IMR-90 (cell line): ENCODE measurements at regions of chr4 and their contacts with region 1.

Region 1: DNA sequence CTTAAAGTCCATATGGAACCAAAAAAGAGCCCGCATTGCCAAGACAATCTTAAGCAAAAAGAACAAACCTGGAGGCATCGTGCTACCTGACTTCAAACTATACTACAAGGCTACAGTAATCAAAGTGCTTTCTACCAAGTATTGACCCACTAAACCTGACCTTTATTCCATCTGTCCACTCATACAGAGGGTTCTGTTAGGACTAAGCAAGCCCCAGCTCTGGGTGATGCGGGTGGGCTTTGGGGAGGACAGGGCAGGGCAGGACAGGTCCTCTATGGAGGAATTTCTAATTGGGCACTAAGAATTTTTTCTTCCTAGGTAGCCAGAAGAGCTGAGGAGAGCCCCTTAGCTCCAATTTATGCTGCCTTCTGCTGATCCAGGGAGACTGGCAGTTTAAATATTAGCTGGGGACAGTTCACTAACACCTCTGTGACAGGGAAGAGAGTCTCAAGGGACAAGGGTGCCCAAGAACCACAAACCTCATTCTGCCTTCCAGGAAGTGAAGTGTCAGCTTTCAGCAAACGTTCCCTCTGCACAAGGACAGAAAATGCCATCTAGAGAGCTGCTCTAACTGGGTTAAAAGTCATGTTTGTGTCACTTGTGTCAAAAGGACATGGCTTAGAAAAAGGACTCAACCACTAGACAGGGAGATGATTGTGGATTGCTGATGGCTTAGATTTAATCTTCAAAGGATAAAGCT is 143.2 kb downstream of the KIT start:
- DNase-seq: no peak
- ATAC-seq: no peak
- H3K4me3 ChIP-seq: no peak overlapping the region
- H3K27ac ChIP-seq: no peak overlapping the region
- H3K4me1 ChIP-seq: 0 out of 2 replicates have a peak, but pooled peaks cover 2% of the 10 kb centered on the region
- H3K27me3 ChIP-seq: no peaks in the 10 kb centered on the region; the same call in none of the 2 replicates
- CTCF ChIP-seq: no peak
- POLR2A ChIP-seq: no peak
- RAD21 ChIP-seq: no peak

Region 2: GRCh38 chr4:55312489-55313101 is 511.6 kb after region 1 on chr4:
- CTCF ChIA-PET with region 1: no interaction called
- POLR2A ChIA-PET with region 1: no interaction called
- dilution Hi-C with region 1: no loop called
- in situ Hi-C with region 1: loop called (anchors 25 kb)
- intact Hi-C with region 1: no loop called
- DNase-seq: peak; percentile 58
- ATAC-seq: peak; percentile 69
- H3K4me3 ChIP-seq: no peak overlapping the region
- H3K27ac ChIP-seq: no peak overlapping the region
- H3K4me1 ChIP-seq: no peaks in the 10 kb centered on the region
- H3K27me3 ChIP-seq: peaks cover 6% of the 10 kb centered on the region
- CTCF ChIP-seq: peak; percentile 66
- POLR2A ChIP-seq: no peak
- RAD21 ChIP-seq: peak; percentile 56

Region 3: DNA sequence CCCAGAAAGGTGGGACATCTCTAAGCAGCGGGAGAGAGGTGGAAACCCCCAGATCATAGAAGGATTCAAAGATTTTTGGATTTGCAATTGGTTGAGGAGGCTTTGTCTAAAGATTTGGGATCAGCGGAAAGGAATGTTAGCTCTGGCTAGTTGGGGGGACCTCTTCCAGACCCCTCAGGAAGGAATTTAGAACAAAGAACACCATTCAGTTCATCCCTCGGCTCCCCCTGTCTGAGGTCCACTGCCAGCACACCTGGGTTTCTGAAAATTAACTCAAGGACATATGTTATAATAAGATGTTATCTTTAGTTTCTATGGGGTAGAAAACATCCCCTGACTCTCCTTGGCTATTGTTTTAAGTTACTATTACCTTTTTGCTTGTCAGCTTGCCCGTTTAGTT is 1311.4 kb after region 1 on chr4:
- CTCF ChIA-PET with region 1: no interaction called
- POLR2A ChIA-PET with region 1: no interaction called
- dilution Hi-C with region 1: no loop called
- in situ Hi-C with region 1: no loop called
- intact Hi-C with region 1: no loop called
- DNase-seq: no peak
- ATAC-seq: no peak
- H3K4me3 ChIP-seq: no peak overlapping the region
- H3K27ac ChIP-seq: no peak overlapping the region
- H3K4me1 ChIP-seq: no peaks in the 10 kb centered on the region
- H3K27me3 ChIP-seq: no peaks in the 10 kb centered on the region
- CTCF ChIP-seq: no peak
- POLR2A ChIP-seq: no peak
- RAD21 ChIP-seq: no peak